ENCODE measurements at regions of chr9 and their contacts with region 1.

Region 1: DNA sequence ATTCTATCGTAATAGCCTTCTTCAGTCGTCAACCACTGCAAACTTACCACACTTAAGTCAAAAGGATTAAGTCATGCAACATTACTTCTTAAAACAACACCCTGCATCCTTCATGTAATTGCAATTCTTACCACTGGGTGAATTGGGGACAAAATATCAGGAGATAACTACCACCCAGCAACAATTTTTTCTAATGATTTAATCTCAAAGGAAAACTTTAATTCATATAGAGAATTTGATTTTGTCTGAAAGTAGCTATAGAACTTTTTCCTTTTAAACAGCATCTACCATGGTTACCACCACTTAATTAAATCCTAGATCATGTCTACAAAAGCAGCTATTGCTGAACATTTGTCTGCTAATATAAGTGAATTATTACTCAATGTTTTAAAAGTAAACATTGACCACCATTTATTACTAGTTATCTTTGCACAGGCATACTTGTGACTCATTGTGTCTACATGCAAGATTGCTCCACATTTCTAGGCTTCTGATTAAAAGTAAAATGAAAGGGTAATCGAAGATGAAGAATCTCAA is 10.5 kb downstream of the MLLT3 start:
- DNase-seq: no peak
- ATAC-seq: peak; percentile 61
- H3K4me3 Mint-ChIP-seq: no peak overlapping the region
- H3K27ac Mint-ChIP-seq: no peak overlapping the region
- H3K4me1 Mint-ChIP-seq: peaks cover 70% of the 10 kb centered on the region
- H3K27me3 Mint-ChIP-seq: no peaks in the 10 kb centered on the region
- CTCF ChIP-seq: peak; percentile 60

Region 2: GRCh38 chr9:20601292-20601691 is 10.5 kb before region 1 on chr9:
- CTCF ChIA-PET with region 1: interaction called, 10 read pairs
- POLR2A ChIA-PET with region 1: interaction called, 3 read pairs
- intact Hi-C with region 1: no loop called
- DNase-seq: no peak
- ATAC-seq: no peak
- H3K4me3 Mint-ChIP-seq: no peak overlapping the region
- H3K27ac Mint-ChIP-seq: no peak overlapping the region
- H3K4me1 Mint-ChIP-seq: peaks cover 72% of the 10 kb centered on the region
- H3K27me3 Mint-ChIP-seq: no peaks in the 10 kb centered on the region
- CTCF ChIP-seq: no peak

Region 3: DNA sequence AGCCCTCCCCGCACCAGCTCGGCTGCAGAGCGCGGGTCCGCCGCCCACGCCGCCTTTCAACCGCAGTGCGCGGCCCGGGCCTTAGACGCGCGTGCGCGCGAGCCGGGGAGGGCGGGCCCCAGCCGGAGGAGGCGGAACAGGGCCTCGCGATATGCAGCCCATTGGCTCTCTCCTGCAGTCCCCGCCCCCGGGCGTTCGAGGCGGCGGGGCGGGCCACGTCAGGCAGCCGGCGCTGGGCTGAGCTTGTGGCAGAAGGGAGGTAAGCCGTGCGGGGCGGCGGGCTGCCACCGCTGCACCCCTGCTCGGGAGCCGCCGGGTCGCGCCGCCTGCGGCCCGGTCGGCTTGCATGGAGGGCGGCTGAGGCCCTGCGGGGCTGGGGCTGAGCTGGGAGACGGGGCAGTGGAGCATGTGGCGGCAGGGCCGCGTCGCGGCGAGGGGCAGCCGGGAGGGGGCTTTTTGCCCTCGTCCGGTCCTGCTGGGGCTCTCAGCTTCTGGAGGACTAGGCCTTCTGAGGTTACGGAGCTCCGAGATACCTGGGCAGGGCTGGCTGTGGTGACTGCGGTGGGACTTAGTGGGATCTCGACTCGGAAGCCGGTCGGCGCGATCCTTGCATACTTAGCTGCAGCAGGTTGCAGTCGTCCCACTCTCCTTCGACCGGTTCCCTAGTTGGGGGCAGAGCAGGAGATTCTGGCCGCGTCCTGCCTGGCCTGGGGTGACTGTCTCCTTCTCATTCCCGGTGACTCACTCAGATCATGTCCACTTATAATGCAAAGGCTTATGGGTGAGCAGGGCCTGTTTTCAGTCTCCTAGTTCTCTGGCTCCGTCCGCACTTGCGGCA is 72.4 kb after region 1 on chr9 and contains the start of gene FOCAD:
- CTCF ChIA-PET with region 1: no interaction called
- POLR2A ChIA-PET with region 1: no interaction called
- intact Hi-C with region 1: no loop called
- DNase-seq: peak; percentile 95
- ATAC-seq: peak; percentile 99
- H3K4me3 Mint-ChIP-seq: peak within 1 kb of the TSS; percentile 92
- H3K27ac Mint-ChIP-seq: peak within 1 kb of the TSS; percentile 81
- H3K4me1 Mint-ChIP-seq: peaks cover 18% of the 10 kb centered on the region
- H3K27me3 Mint-ChIP-seq: no peaks in the 10 kb centered on the region
- CTCF ChIP-seq: no peak
- total RNA-seq, gene FOCAD: 37.3 to 42.8 TPM

Region 4: GRCh38 chr9:20722221-20722620 is 110.4 kb after region 1 on chr9:
- CTCF ChIA-PET with region 1: no interaction called
- POLR2A ChIA-PET with region 1: no interaction called
- intact Hi-C with region 1: no loop called
- DNase-seq: no peak
- ATAC-seq: no peak
- H3K4me3 Mint-ChIP-seq: no peak overlapping the region
- H3K27ac Mint-ChIP-seq: no peak overlapping the region
- H3K4me1 Mint-ChIP-seq: peaks cover 9% of the 10 kb centered on the region
- H3K27me3 Mint-ChIP-seq: no peaks in the 10 kb centered on the region
- CTCF ChIP-seq: no peak